Left lung (tissue), 14 donors: ENCODE measurements at regions of chr7 and their contacts with region 1.

Region 1: DNA sequence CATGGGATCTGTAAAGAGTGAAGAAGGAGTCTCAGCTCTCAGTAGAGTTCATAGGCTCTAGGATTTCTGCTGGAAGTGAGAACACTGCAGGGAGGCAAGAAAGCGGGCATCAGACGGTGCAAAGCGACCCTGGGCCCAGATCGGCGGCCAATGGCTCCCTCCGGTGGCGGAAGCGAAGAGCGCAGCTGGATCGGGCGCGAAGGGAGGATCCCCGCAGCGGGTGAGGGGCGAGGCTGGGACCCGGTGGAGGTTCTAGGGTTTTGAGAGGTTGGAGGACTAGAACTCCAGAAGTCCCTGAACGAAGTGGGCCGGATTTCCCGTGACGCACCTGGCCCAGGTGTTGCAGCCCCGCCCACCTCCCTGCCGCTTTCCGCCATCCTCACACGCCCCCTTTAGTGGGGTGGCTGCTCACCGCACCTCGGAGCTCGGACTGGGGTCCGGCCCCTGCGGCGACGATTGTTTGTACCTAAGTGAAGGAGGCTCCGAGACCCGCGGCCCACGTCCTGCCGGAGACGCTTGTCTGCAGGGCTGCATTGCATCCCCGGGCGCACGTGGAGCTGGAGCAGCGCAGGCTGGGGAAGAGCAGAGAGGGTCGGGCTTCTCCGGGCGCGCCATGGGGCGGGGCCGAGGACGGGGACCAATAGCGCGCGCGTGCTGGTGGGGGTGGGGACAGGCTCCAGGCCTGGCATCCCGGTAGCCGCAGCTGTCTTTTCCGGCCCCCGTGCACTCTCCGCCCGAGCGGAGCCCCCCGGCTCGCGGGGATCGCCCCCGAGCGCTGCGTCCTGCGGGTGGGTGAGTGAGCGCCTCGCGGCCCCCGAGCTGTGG is at the start of gene SLC12A9:
- DNase-seq: peak; percentile 89 to 98 (median 94)
- ATAC-seq: peak; percentile 100
- H3K4me3 ChIP-seq: peak within 1 kb of the TSS; percentile 86 to 87
- H3K27ac ChIP-seq: peak within 1 kb of the TSS in 1 of 2 donors; percentile 87
- H3K4me1 ChIP-seq: peaks cover 0 to 26% of the 10 kb centered on the region in 2 donors
- H3K27me3 ChIP-seq: no peaks in the 10 kb centered on the region
- CTCF ChIP-seq: peak; percentile 88 to 92
- polyA plus RNA-seq, gene SLC12A9: 32.2 to 53.7 (median 40.8) TPM

Region 2: DNA sequence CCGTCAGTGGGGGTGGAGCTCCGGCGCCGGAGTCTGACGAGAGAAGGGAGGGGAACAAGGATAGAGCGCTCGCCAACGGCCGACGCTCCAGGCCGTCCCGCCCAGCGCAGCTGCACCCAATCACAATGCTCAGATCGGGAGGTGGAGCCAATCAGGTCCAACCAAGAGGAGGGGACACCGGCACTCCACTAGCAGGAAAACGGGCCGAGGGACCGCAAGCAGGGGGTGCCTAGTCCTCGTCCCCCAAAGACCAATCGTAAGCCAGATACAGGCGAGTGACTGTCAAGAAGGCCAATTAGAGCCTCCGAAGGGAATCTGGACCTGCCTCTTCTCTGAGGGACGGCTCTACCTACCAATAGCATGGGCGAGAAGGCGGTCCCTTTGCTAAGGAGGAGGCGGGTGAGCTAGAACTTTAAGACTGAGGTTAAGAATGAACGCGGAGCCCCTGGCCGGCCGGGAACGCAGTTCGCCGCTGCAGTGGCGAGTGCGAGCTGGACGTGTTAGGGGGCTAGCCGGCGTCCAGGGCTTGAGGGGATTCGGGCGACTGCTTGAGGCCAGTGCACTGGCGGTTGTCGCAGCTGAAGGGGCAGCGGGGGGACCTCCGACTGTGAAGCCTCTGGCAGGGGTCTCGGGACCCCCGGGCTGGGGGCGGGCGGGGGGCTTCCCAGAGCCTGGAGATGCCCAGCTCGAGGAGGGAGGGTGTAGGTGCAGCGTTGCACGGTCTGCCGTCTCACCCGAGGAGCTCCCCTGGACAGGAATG is 265.8 kb before region 1 on chr7 and contains the start of gene FBXO24:
- intact Hi-C with region 1: no loop called
- DNase-seq: peak; percentile 99 to 100 (median 100)
- ATAC-seq: peak; percentile 81
- H3K4me3 ChIP-seq: peak within 1 kb of the TSS; percentile 78 to 100
- H3K27ac ChIP-seq: peak within 1 kb of the TSS; percentile 95 to 98
- H3K4me1 ChIP-seq: peaks cover 25 to 43% of the 10 kb centered on the region in 2 donors
- H3K27me3 ChIP-seq: peaks cover 0 to 25% of the 10 kb centered on the region in 2 donors
- CTCF ChIP-seq: peak in 1 of 2 donors; percentile 10
- polyA plus RNA-seq, gene FBXO24: 3.9 to 5.5 (median 5.0) TPM

Region 3: GRCh38 chr7:100705753-100706671 is 146.2 kb before region 1 on chr7 and contains the start of gene POP7:
- intact Hi-C with region 1: loop called in 1 of 2 experiments (anchors 10 kb)
- DNase-seq: peak; percentile 98 to 99 (median 99)
- ATAC-seq: peak; percentile 95
- H3K4me3 ChIP-seq: peak within 1 kb of the TSS; percentile 64 to 86
- H3K27ac ChIP-seq: peak within 1 kb of the TSS; percentile 91 to 94
- H3K4me1 ChIP-seq: peaks cover 9 to 19% of the 10 kb centered on the region in 2 donors
- H3K27me3 ChIP-seq: no peaks in the 10 kb centered on the region
- CTCF ChIP-seq: no peak
- polyA plus RNA-seq, gene POP7: 15.8 to 23.8 (median 20.2) TPM

Region 4: GRCh38 chr7:100803398-100804233 is 48.6 kb before region 1 on chr7:
- intact Hi-C with region 1: loop called in 1 of 2 experiments (anchors 5 kb)
- DNase-seq: peak; percentile 71 to 89 (median 82)
- ATAC-seq: peak; percentile 87
- H3K4me3 ChIP-seq: no peak overlapping the region
- H3K27ac ChIP-seq: peak overlapping the region; percentile 50 to 65
- H3K4me1 ChIP-seq: peaks cover 24 to 51% of the 10 kb centered on the region in 2 donors
- H3K27me3 ChIP-seq: no peaks in the 10 kb centered on the region
- CTCF ChIP-seq: no peak